GM13977 (cell line): ENCODE measurements at regions of chr10 and their contacts with region 1.

Region 1: DNA sequence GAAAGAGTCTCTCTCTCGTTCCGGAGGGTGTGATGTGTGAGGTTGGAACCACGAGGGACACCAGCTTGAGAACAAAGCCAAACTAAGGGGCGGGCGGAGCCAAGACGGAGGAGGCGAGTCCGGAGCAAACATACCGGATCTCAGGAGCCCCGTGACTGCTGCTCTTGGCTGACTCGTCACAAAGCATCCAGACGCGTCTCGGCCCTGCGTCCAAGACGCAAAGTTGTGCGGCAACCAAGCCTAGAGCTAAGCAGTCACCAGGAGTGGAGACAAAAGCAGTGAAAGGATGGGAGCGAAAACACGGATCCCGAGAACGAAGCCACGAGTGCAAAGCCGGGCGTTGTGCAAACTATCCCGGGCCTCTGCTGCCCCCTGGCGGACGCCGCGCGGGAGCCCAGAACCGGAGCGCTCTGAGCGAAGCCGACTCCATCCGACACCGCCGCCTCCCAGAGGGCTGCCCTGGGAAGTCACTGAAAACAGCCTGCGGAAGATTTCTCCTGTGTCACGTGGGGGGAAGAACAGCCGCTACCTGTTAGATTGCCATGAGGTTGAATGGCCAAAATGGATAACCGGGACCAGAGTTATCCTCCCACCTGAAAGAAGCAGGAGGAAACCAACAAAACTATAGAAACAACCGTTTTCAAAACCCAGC is 46.4 kb upstream of the TMEM72 start:
- DNase-seq: peak; percentile 88
- CTCF ChIP-seq: peak; percentile 89

Region 2: DNA sequence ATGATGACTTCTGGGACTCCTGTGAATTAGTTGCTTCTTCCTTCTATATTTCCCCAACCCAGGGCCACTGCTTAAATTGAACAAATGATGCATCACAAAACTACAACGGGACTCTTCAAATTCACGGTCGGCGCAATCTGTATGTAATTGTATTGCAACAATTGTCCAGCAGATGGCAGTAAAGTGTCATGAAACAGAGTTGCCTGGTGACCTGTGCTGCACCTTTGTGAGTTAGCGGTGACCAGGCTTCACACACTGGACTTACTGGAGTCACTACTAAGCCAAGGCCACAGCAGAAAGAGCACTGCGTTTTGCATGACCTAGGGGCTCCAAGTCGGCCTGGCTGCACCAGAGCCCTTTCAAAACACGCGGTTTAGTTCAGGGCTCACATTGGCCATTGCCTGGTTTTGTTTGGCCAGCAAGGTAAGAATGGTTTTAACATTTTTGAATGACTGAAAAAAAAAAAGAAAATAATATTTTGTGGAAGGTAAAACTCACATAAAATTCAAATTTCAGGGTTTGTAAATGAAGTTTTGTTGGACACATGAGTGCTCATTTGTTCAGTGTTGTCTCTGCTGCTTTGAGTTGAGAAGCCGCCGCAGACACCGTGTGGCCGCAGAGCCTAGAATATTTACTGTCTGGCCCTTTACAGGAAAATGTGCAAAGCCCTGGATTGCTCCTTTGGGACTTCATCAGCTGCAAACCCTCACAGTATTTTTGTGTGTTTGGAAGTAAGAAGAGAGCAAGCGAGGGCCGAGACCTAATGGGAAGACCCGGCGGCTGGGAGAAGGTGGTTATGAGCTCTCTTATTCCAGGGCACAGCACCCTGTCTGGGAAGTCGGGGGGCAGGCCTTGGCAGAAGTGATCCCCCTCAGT is 1192.9 kb before region 1 on chr10:
- in situ Hi-C with region 1: loop called (anchors 25 kb)
- DNase-seq: peak; percentile 82
- CTCF ChIP-seq: peak; percentile 78

Region 3: DNA sequence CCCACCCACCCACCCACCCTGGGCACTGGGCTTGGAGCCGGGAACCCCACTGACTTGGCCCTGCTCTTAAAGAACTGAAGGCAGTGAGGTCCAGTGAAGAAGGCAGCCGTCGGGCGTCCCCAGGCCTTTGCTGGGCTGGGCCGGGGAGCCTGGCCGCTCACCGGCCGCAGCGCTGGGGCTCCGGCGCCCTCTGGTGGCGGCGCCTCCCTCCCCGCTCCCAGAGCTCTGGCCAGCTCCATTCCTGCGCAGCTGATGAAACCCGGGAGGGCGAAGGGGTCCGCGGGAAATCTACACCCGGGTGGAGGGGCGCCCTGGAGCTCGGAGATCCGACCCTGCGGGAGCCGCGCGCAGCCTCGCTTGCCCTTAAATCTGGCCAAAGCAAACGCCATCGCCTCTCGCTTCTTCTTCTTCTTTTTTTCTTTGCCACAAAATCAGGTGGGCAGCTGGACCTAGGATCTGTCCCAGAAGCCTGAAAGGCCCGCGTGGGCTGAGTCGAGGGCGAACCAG is 478.2 kb before region 1 on chr10:
- in situ Hi-C with region 1: loop called (anchors 25 kb)
- DNase-seq: peak; percentile 90
- CTCF ChIP-seq: peak; percentile 94